ENCODE measurements at regions of chr5 and their contacts with region 1.

Region 1: GRCh38 chr5:79712741-79713140 is 23.1 kb downstream of the CMYA5 start:
- DNase-seq: no peak
- H3K4me3 ChIP-seq: no peak overlapping the region
- H3K27ac ChIP-seq: no peak overlapping the region
- H3K4me1 ChIP-seq: no peaks in the 10 kb centered on the region
- H3K27me3 ChIP-seq: no peaks in the 10 kb centered on the region
- CTCF ChIP-seq: no peak

Region 2: DNA sequence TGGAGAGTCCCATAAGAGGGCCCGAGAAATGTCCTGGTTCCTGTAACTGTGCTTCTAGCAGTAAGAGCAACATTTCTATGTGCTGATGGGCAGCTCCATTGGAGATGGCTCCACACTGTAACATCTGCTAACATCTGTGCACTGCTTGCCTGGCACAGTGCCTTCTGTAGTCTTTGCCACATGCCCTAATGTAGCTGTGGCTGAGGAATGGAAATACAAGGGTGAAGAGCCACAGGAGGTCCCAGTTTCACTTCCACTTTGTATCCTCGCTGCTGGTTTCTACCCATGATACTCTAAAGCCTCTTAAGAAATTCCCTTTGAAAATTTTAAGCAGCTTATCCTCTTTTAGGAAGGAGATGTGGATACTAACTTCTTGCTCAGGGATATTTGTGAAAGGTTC is 296.2 kb before region 1 on chr5:
- CTCF ChIA-PET with region 1: interaction called, 10 read pairs
- dilution Hi-C with region 1: no loop called
- in situ Hi-C with region 1: no loop called
- intact Hi-C with region 1: no loop called
- DNase-seq: no peak
- H3K4me3 ChIP-seq: no peak overlapping the region
- H3K27ac ChIP-seq: no peak overlapping the region
- H3K4me1 ChIP-seq: no peaks in the 10 kb centered on the region
- H3K27me3 ChIP-seq: no peaks in the 10 kb centered on the region
- CTCF ChIP-seq: no peak

Region 3: DNA sequence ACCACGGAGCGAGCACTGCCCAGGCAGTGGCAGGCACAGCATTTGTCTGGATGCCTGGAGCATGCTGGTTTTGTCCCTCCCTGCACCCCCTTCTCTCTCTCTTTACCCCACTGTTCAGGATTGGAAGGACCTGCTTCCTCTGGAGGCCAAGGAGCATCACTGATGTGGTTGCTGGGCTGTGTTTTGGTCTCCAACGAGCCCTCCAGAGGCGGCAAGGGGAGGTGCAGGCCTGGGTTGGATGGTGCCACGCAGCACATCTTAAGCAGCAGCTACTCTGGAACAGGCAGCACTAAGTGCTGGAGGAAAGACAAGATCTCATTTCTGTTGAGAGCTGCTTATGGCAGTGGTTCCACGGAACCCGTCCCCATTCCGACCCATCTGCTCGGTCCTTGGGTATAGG is 116.5 kb after region 1 on chr5:
- CTCF ChIA-PET with region 1: no interaction called
- dilution Hi-C with region 1: loop called (anchors 10 kb)
- in situ Hi-C with region 1: no loop called
- intact Hi-C with region 1: no loop called
- DNase-seq: no peak
- H3K4me3 ChIP-seq: no peak overlapping the region
- H3K27ac ChIP-seq: no peak overlapping the region
- H3K4me1 ChIP-seq: no peaks in the 10 kb centered on the region
- H3K27me3 ChIP-seq: peaks cover 8% of the 10 kb centered on the region
- CTCF ChIP-seq: peak in 1 of 2 donors; percentile 26

Region 4: DNA sequence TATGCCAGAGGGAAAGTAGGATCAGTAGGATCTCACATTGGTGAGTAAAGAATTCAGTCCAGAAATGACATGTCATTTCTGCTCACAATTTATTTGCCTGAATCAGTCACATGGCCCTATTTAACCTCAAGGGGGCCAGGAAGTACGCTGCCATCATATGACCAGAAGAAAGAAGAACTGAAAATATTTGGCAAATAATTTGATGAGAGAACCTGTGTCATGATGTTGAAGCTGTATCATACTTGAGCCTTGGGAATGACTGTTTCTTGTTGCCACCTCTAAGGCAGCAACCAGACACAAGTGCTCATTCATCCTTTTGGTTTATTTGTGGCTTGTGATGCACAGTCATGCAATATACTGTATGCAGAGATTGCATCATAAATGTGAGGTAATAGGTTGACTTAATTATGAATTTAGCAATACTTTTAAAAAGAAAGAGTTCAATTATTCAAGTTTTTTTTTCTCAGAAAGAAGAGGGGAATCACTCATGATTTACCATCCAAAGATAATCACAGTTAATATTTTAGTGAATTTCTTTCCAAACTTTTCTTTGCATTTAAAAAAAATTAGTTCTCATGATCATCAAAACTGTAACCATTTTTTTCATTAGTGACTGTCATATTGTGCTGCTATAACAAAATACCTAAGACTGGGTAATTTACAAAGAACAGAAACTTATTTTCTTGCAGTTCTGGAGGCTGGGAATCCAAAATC is 686.9 kb after region 1 on chr5:
- CTCF ChIA-PET with region 1: no interaction called
- dilution Hi-C with region 1: no loop called
- in situ Hi-C with region 1: no loop called
- intact Hi-C with region 1: no loop called
- DNase-seq: peak; percentile 92
- H3K4me3 ChIP-seq: no peak overlapping the region
- H3K27ac ChIP-seq: peak overlapping the region; percentile 35
- H3K4me1 ChIP-seq: peaks cover 6% of the 10 kb centered on the region
- H3K27me3 ChIP-seq: no peaks in the 10 kb centered on the region
- CTCF ChIP-seq: no peak

Measured in mammary epithelial cell (primary cell).